Activated B cell treated with CpG ODN at 0.5 μM for 24 hours (primary cell): ENCODE measurements at regions of chr10 and their contacts with region 1.

Region 1: GRCh38 chr10:43407576-43408330 is 1.2 kb downstream of the HNRNPF start:
- DNase-seq: peak; percentile 75
- ATAC-seq: peak; percentile 35
- H3K4me3 Mint-ChIP-seq: peak overlapping the region; percentile 95
- H3K27ac Mint-ChIP-seq: peak overlapping the region; percentile 98
- H3K4me1 Mint-ChIP-seq: peaks cover 46% of the 10 kb centered on the region
- H3K27me3 Mint-ChIP-seq: no peaks in the 10 kb centered on the region
- CTCF ChIP-seq: no peak

Region 2: DNA sequence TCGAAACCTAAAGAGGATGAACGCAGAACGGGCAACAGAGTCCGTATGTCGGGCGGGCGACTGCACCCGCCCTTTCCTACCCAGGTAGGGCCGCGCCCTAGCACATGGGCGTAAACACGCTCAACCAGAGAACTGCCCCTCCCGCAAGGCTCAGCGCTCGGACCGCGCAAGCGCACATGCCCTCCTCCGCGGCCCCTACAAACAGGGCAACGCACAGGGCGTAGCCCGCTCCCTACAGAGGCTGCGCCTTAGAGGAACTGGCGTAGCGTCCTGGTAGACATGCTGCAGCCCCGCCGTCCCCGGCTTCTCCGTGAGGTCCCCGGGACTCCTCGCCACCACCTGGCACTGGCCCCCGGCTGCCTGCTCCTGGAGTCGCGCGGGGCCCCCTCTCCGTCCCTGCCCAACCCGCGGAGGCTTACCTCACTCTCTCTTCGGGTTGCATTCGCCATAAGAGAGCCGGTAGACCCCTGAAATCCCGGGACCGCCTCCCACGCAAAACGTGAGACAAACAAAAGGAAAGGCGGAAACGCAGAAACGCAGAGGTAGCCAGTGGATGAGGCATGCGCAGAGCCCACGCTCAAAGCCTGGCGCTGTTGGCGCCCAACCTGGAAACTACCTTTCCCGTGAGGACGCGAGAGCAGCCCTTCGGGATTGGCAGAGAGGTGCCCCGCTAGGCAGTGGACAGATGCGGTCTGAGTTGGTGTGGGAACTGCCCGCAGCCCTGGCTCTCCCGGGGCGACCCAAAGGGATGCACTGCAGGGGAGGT is 769.5 kb before region 1 on chr10 and contains the start of gene ZNF33B:
- CTCF ChIA-PET with region 1: no interaction called
- POLR2A ChIA-PET with region 1: no interaction called
- intact Hi-C with region 1: loop called (anchors 1 kb)
- DNase-seq: peak; percentile 88
- ATAC-seq: peak; percentile 96
- H3K4me3 Mint-ChIP-seq: peak within 1 kb of the TSS; percentile 96
- H3K27ac Mint-ChIP-seq: peak within 1 kb of the TSS; percentile 96
- H3K4me1 Mint-ChIP-seq: peaks cover 46% of the 10 kb centered on the region
- H3K27me3 Mint-ChIP-seq: no peaks in the 10 kb centered on the region
- CTCF ChIP-seq: no peak
- total RNA-seq, gene ZNF33B: 31.0 and 34.0 TPM in 2 replicates

Region 3: GRCh38 chr10:43396928-43397624 is 10.7 kb before region 1 on chr10:
- CTCF ChIA-PET with region 1: interaction called, 5 read pairs
- POLR2A ChIA-PET with region 1: interaction called, 71 read pairs
- intact Hi-C with region 1: loop called (anchors 1 kb)
- DNase-seq: peak; percentile 77
- ATAC-seq: peak; percentile 79
- H3K4me3 Mint-ChIP-seq: peak overlapping the region; percentile 89
- H3K27ac Mint-ChIP-seq: peak overlapping the region; percentile 93
- H3K4me1 Mint-ChIP-seq: peaks cover 82% of the 10 kb centered on the region
- H3K27me3 Mint-ChIP-seq: no peaks in the 10 kb centered on the region
- CTCF ChIP-seq: no peak

Region 4: DNA sequence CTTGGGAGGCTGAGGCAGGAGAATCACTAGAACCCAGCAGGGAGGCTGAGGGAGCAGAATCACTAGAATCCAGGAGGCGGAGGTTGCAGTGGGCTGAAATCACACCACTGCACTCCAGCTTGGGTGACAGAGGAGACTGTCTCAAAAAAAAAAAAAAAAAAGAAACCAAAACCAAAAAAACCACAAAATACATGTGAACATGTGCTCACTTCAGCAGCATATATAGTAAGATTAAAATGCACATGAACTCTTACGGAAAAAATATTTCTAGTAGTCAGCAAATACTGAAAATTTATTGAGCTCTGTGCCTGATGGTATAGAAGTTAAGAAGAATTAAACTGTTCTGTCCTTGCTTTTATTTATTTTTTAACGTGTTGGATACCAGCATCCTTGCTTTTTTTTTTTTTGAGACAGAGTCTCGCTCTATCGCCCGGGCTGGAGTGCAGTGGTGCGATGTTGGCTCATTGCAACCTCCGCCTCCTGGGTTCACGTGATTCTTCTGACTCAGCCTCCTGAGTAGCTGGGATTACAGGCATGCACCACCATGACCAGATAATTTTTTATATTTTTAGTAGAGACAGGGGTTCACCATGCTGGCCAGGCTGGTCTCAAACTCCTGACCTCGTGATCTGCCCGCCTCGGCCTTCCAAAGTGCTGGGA is 19.5 kb after region 1 on chr10:
- CTCF ChIA-PET with region 1: interaction called, 4 read pairs
- POLR2A ChIA-PET with region 1: interaction called, 25 read pairs
- intact Hi-C with region 1: no loop called
- DNase-seq: no peak
- ATAC-seq: peak; percentile 89
- H3K4me3 Mint-ChIP-seq: peak overlapping the region; percentile 70
- H3K27ac Mint-ChIP-seq: peak overlapping the region; percentile 93
- H3K4me1 Mint-ChIP-seq: peaks cover 11% of the 10 kb centered on the region
- H3K27me3 Mint-ChIP-seq: no peaks in the 10 kb centered on the region
- CTCF ChIP-seq: no peak

Region 5: DNA sequence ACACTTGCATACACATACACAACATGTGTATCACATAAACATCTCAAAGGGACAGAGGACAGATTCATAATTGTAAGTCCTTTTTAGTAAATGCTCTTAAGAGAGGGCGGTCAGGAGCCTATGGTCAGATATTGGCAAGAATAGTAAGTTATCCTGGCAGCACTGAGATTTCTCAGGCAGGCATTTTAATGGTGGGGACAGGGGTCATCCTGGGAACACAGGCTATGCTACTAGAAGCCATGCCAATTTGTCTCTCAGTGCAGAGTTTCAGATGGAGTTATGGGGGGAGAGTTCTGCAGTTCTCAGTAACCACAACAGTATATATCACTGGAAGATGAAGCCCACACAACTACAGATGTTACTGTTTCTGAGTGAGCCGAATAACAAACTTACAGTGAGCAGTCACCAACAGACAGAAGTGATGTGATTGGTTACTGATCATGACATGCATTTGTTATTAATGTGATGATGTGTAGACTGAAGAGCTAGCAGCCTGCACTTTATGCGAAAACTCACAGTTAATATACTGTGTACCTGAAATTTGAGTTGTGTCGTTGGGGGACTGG is 45.6 kb after region 1 on chr10:
- CTCF ChIA-PET with region 1: no interaction called
- POLR2A ChIA-PET with region 1: interaction called, 25 read pairs
- intact Hi-C with region 1: no loop called
- DNase-seq: no peak
- ATAC-seq: no peak
- H3K4me3 Mint-ChIP-seq: peak overlapping the region; percentile 69
- H3K27ac Mint-ChIP-seq: peak overlapping the region; percentile 98
- H3K4me1 Mint-ChIP-seq: peaks cover 44% of the 10 kb centered on the region
- H3K27me3 Mint-ChIP-seq: no peaks in the 10 kb centered on the region
- CTCF ChIP-seq: no peak

Region 6: GRCh38 chr10:43574001-43574892 is 166.5 kb after region 1 on chr10 and contains the start of gene ZNF239:
- CTCF ChIA-PET with region 1: no interaction called
- POLR2A ChIA-PET with region 1: interaction called, 6 read pairs
- intact Hi-C with region 1: loop called (anchors 5 kb)
- DNase-seq: peak; percentile 74
- ATAC-seq: peak; percentile 95
- H3K4me3 Mint-ChIP-seq: peak within 1 kb of the TSS; percentile 89
- H3K27ac Mint-ChIP-seq: peak within 1 kb of the TSS; percentile 83
- H3K4me1 Mint-ChIP-seq: peaks cover 48% of the 10 kb centered on the region
- H3K27me3 Mint-ChIP-seq: no peaks in the 10 kb centered on the region
- CTCF ChIP-seq: no peak
- total RNA-seq, gene ZNF239: 5.7 and 9.4 TPM in 2 replicates